Posterior vena cava (tissue), 2 donors: ENCODE measurements at regions of chrX and their contacts with region 1.

Region 1: GRCh38 chrX:26562156-26562555 is 346.2 kb downstream of the MAGEB5 start:
- DNase-seq: no peak

Region 2: DNA sequence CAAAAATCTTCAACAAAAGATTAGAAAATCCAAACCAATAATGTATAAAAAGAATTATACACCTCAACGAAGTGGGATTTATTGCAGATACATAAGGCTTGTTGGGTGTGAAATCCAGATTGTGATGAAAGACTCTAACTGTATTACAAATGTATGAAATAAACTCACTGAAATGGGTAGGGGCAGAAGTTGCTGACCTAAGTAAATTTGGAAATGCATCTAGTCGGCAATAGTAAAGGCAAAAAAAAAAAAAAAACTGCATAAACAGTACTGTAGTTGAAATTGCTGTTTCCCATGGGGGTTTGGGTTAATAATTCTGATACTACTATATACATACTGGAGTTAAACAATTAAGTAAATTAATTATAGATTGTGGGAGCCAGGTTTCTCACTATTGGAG is 554.7 kb before region 1 on chrX:
- intact Hi-C with region 1: loop called in 1 of 2 experiments (anchors 5 kb)
- DNase-seq: no peak

Region 3: GRCh38 chrX:26613956-26614355 is 51.8 kb after region 1 on chrX:
- intact Hi-C with region 1: loop called in 1 of 2 experiments (anchors 2 kb)
- DNase-seq: no peak